Breast epithelium (tissue), 4 donors: ENCODE measurements at regions of chr5 and their contacts with region 1.

Region 1: GRCh38 chr5:106363578-106363977 is 1307.2 kb downstream of the EFNA5 start:
- DNase-seq: no peak
- H3K4me3 ChIP-seq: no peak overlapping the region
- H3K27ac ChIP-seq: no peak overlapping the region
- H3K4me1 ChIP-seq: no peaks in the 10 kb centered on the region
- H3K27me3 ChIP-seq: no peaks in the 10 kb centered on the region
- CTCF ChIP-seq: no peak
- POLR2A ChIP-seq: no peak

Region 2: DNA sequence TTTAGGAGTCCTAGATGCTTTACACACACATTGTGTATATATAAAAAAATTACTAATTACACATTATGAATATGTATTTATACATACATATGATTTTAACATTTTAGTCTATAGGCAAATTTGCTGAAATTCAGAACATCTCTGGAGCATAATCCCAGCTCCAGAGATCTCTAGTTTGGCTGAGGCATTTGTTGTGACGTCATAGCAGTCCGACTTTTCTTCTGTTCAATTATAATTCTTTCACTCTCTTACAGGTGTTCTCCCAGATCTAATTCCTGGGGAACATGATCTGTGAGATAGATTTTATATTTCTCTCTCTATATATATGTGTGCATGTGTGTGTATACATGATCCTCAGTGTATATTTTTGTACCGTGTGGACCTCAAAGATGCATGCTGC is 569.0 kb before region 1 on chr5:
- intact Hi-C with region 1: loop called (anchors 5 kb)
- DNase-seq: no peak
- H3K4me3 ChIP-seq: no peak overlapping the region
- H3K27ac ChIP-seq: no peak overlapping the region
- H3K4me1 ChIP-seq: no peaks in the 10 kb centered on the region
- H3K27me3 ChIP-seq: no peaks in the 10 kb centered on the region
- CTCF ChIP-seq: no peak
- POLR2A ChIP-seq: no peak